B cell (primary cell): ENCODE measurements at regions of chr9 and their contacts with region 1.

Region 1: GRCh38 chr9:33024966-33025571 is at the start of gene DNAJA1:
- DNase-seq: peak; percentile 96
- ATAC-seq: peak; percentile 83
- H3K4me3 ChIP-seq: peak within 1 kb of the TSS; percentile 74 to 100 (median 100)
- H3K4me3 Mint-ChIP-seq: peak within 1 kb of the TSS; percentile 97
- H3K27ac ChIP-seq: peak within 1 kb of the TSS; percentile 99
- H3K27ac Mint-ChIP-seq: peak within 1 kb of the TSS; percentile 95
- H3K4me1 ChIP-seq: peaks cover 17 to 34% of the 10 kb centered on the region in 2 donors
- H3K4me1 Mint-ChIP-seq: peaks cover 59% of the 10 kb centered on the region
- H3K27me3 ChIP-seq: no peaks in the 10 kb centered on the region
- H3K27me3 Mint-ChIP-seq: no peaks in the 10 kb centered on the region
- CTCF ChIP-seq: no peak
- total RNA-seq, gene DNAJA1: 66.6 and 68.6 TPM in 2 replicates

Region 2: DNA sequence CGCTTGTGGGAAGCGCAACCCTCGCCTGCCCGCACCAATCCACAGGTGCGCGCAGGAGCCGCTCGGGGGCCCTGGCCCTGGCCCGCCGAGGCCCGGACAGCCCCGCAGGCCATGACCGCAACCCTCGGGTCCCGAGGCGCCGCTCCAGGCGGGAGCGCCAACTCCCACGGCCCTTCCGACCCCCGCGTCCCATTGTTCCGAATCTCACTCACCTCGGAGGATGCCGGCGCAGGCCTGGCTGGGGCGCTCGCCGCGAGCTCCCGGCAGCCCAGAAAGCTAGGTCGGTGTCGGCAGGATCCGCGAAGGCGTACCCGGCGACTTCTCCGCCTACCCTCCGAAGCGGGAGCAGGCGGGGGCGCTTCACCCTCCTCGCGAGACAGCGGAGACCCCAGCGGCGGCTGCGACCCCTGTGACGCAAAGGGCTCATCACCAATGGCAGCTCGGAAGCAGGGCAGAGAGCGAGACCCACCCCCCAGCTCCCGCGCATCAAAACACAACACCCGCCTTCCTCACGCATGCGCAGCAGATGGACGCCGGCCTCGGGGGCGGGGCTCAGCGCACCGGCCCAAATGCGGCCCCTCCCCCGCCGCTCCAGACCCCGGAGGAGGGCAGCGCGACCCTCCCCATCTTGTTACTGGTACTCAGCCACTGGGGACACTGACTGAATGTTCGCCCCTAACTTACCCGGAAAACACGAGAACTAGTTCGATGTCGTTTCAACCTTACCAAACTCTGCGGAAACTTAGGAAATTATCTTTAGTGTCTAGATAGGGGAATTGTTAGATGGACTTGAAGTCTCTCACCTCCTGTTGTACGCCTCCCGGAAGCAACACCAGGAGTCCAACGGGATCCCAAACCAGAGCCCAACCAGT is 474.3 kb before region 1 on chr9:
- CTCF ChIA-PET with region 1: no interaction called
- POLR2A ChIA-PET with region 1: interaction called, 3 read pairs
- intact Hi-C with region 1: loop called (anchors 1 kb)
- DNase-seq: peak; percentile 97
- ATAC-seq: peak; percentile 84
- H3K4me3 ChIP-seq: peak overlapping the region; percentile 86 to 98 (median 87)
- H3K4me3 Mint-ChIP-seq: peak overlapping the region; percentile 91
- H3K27ac ChIP-seq: peak overlapping the region; percentile 89 to 92
- H3K27ac Mint-ChIP-seq: peak overlapping the region; percentile 91
- H3K4me1 ChIP-seq: peaks cover 14 to 15% of the 10 kb centered on the region in 2 donors
- H3K4me1 Mint-ChIP-seq: peaks cover 34% of the 10 kb centered on the region
- H3K27me3 ChIP-seq: no peaks in the 10 kb centered on the region
- H3K27me3 Mint-ChIP-seq: no peaks in the 10 kb centered on the region
- CTCF ChIP-seq: peak; percentile 5

Region 3: GRCh38 chr9:33044127-33044673 is 19.1 kb after region 1 on chr9:
- CTCF ChIA-PET with region 1: interaction called, 5 read pairs
- POLR2A ChIA-PET with region 1: interaction called, 4 read pairs
- intact Hi-C with region 1: loop called (anchors 2 kb)
- DNase-seq: peak; percentile 89
- ATAC-seq: peak; percentile 76
- H3K4me3 ChIP-seq: peak overlapping the region; percentile 48 to 63 (median 54)
- H3K4me3 Mint-ChIP-seq: peak overlapping the region; percentile 90
- H3K27ac ChIP-seq: peak overlapping the region in 1 of 2 donors; percentile 21
- H3K27ac Mint-ChIP-seq: peak overlapping the region; percentile 84
- H3K4me1 ChIP-seq: peaks cover 4 to 14% of the 10 kb centered on the region in 2 donors
- H3K4me1 Mint-ChIP-seq: peaks cover 18% of the 10 kb centered on the region
- H3K27me3 ChIP-seq: no peaks in the 10 kb centered on the region
- H3K27me3 Mint-ChIP-seq: no peaks in the 10 kb centered on the region
- CTCF ChIP-seq: no peak

Region 4: DNA sequence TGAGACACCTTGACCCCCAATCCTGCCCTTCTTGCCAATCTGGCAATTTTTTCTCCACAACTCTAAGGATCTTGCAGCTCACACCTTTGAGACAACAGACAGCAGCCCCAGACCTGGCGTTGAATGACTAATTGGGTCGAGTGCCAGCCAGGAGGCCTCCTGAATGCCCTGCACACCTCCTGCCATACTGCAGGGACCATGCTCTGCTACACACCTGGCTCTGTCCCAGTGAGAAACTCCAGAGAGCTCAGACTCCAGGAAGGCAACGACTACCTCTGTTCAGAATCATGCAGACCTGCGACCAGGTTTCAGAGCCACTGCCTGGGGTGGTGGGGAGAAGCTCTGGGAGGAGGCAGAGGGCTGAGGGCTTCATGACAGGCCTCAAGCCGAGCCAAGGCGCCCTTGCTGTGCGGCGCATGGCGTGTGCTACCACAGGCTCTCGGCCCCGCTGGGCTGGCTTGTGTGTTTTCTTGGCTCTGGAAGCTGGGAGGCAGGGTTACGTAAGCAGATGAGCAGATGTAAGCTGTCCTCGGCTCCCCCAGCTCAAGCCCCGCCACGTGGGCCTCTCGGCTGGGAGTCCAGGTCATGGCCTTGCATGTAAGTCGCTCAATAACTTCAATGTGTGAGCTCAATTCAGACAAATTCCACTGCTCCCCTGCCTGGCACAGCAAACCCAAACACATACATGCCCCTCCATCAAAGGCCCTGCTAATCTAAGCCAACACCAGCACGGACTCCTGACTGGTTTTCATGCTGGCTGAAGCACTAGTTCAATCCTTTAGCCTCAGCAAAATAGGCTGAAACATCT is 114.6 kb after region 1 on chr9:
- CTCF ChIA-PET with region 1: no interaction called
- POLR2A ChIA-PET with region 1: no interaction called
- intact Hi-C with region 1: loop called (anchors 5 kb)
- DNase-seq: no peak
- ATAC-seq: no peak
- H3K4me3 ChIP-seq: peak overlapping the region in 1 of 5 experiments; percentile 13
- H3K4me3 Mint-ChIP-seq: peak overlapping the region; percentile 77
- H3K27ac ChIP-seq: peak overlapping the region; percentile 87
- H3K27ac Mint-ChIP-seq: peak overlapping the region; percentile 93
- H3K4me1 ChIP-seq: peaks cover 99 to 100% of the 10 kb centered on the region in 2 donors
- H3K4me1 Mint-ChIP-seq: peaks cover 96% of the 10 kb centered on the region
- H3K27me3 ChIP-seq: no peaks in the 10 kb centered on the region
- H3K27me3 Mint-ChIP-seq: no peaks in the 10 kb centered on the region
- CTCF ChIP-seq: no peak

Region 5: GRCh38 chr9:33473643-33474352 is 448.7 kb after region 1 on chr9 and contains the start of gene NOL6:
- CTCF ChIA-PET with region 1: no interaction called
- POLR2A ChIA-PET with region 1: no interaction called
- intact Hi-C with region 1: loop called (anchors 10 kb)
- DNase-seq: peak; percentile 99
- ATAC-seq: peak; percentile 99
- H3K4me3 ChIP-seq: peak within 1 kb of the TSS; percentile 80 to 99 (median 95)
- H3K4me3 Mint-ChIP-seq: peak within 1 kb of the TSS; percentile 99
- H3K27ac ChIP-seq: peak within 1 kb of the TSS; percentile 44 to 81
- H3K27ac Mint-ChIP-seq: peak within 1 kb of the TSS; percentile 92
- H3K4me1 ChIP-seq: peaks cover 17 to 22% of the 10 kb centered on the region in 2 donors
- H3K4me1 Mint-ChIP-seq: peaks cover 28% of the 10 kb centered on the region
- H3K27me3 ChIP-seq: no peaks in the 10 kb centered on the region
- H3K27me3 Mint-ChIP-seq: no peaks in the 10 kb centered on the region
- CTCF ChIP-seq: no peak
- total RNA-seq, gene NOL6: 31.8 and 31.9 TPM in 2 replicates